AG04449 (cell line): ENCODE measurements at regions of chr11 and their contacts with region 1.

Region 1: GRCh38 chr11:111777094-111778046 is 11.2 kb upstream of the PPP2R1B start:
- DNase-seq: peak; percentile 41
- H3K4me3 ChIP-seq: no peak overlapping the region
- CTCF ChIP-seq: peak; percentile 62

Region 2: GRCh38 chr11:111454561-111455192 is 322.7 kb before region 1 on chr11:
- CTCF ChIA-PET with region 1: interaction called, 46 read pairs
- POLR2A ChIA-PET with region 1: no interaction called
- DNase-seq: peak; percentile 5
- H3K4me3 ChIP-seq: no peak overlapping the region
- CTCF ChIP-seq: peak; percentile 69

Region 3: DNA sequence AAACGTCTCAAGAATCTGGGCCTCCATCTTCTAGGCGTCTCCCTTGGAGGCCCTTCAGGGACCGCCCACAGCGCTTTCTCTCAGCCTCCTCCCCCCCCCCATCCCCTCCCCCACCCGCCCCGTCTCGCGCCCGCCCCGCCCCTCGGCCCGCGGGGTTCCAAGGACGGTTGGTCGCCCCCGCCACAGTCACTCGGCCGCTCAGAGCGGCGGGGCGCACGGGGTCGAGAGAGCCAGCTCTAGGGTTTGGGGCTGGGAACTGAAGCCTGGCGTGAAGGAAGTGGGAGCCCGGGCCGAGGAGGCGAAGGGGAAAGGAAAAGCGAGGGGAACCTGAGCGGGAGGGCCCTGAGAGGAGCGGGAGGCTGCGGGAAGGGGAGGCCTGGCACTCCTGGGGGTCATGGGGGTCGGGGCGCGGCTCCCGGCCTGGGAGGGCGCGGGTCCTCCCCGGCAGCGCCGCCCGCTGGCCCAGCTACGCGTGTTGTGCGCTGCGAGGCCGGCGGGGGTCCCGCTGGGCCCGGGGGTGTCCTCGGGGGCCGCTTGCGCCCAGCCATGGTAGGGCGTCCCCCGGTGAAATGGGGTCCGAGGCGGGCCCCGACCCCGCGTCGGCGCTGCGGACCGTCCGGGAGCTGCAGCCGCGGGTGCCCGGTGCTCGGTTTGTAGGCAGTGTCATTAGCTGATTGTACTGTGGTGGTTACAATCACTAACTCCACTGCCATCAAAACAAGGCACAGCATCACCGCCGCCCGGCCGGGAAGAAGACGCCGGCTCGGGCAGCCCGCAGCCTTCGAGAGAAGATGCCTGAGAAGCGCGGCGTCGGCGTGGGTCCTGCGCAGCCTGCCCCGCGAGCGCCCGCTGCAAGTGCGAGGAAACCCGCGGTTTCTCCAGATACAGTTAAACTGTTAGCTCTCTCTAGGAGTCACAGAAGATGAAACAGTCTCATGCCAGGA is 264.8 kb before region 1 on chr11 and contains the start of gene BTG4:
- CTCF ChIA-PET with region 1: no interaction called
- POLR2A ChIA-PET with region 1: no interaction called
- DNase-seq: no peak
- H3K4me3 ChIP-seq: peak within 1 kb of the TSS; percentile 52
- CTCF ChIP-seq: no peak

Region 4: DNA sequence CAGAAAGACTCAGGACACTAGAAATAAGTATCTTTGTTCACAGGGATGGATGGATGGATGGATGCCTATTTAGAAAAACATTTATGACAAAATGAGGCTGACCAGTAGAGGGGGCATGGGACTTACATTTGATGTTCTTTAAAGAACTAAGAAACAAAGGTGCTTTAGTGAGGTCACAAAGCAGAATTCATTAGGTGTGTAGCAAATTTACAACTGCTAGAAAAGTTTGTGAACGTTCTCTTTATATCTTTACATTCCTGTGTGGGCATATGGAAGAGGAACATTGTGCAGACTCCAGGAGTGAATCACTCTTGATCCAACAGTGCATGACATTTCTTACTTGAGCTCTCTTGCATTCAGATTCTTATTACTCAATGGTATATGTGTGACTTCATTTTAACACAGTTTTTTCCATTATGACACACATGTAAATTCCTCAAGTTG is 191.0 kb before region 1 on chr11:
- CTCF ChIA-PET with region 1: interaction called, 89 read pairs
- POLR2A ChIA-PET with region 1: no interaction called
- DNase-seq: no peak
- H3K4me3 ChIP-seq: no peak overlapping the region
- CTCF ChIP-seq: peak; percentile 43

Region 5: DNA sequence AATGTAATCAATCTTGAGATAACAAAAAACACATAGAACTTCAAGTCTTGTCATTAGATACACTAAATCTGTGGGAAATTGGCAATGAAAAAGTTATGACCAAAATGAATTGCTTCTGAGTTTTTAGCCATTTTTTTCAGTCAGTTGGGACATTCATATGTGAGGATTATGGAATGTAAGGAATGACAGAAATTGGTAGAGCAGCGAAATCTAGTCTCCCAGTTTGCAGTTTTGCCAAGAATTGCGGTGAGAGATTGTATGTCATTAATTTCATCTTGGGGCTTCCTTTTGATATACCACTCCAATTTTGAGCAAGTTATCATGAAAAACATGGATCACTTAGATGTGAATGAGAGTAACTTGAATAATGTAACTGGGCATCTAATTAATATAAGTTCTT is 125.2 kb before region 1 on chr11:
- CTCF ChIA-PET with region 1: no interaction called
- POLR2A ChIA-PET with region 1: no interaction called
- DNase-seq: no peak
- H3K4me3 ChIP-seq: no peak overlapping the region
- CTCF ChIP-seq: no peak

Region 6: GRCh38 chr11:111766093-111766833 is 11.1 kb before region 1 on chr11 and contains the start of gene PPP2R1B:
- CTCF ChIA-PET with region 1: interaction called, 54 read pairs
- POLR2A ChIA-PET with region 1: no interaction called
- DNase-seq: no peak
- H3K4me3 ChIP-seq: peak within 1 kb of the TSS; percentile 95
- CTCF ChIP-seq: no peak

Region 7: DNA sequence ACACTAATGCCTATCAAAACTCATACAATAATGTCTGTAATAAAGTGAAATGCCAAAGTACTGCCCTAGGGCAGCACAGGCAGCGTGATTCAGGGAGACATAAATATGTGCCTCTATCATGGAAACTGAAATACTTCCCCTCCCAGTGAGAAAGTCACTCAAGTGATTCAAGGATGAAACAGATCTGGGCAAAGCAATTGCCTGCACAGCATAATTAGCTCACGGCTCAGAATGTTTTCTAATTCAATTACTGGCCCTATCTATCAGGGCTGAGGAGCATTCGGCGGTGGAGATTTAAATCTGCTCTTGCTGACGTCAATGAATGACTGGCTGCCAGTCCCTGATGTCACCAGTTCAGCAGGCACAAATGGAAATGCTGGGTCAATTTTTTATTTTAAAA is 16.5 kb after region 1 on chr11:
- CTCF ChIA-PET with region 1: interaction called, 48 read pairs
- POLR2A ChIA-PET with region 1: no interaction called
- DNase-seq: peak; percentile 57
- H3K4me3 ChIP-seq: no peak overlapping the region
- CTCF ChIP-seq: no peak

Region 8: GRCh38 chr11:111841370-111842053 is 64.1 kb after region 1 on chr11:
- CTCF ChIA-PET with region 1: interaction called, 33 read pairs
- POLR2A ChIA-PET with region 1: no interaction called
- DNase-seq: peak; percentile 96
- H3K4me3 ChIP-seq: no peak overlapping the region
- CTCF ChIP-seq: peak; percentile 78